ENCODE measurements at regions of chr2 and their contacts with region 1.

Region 1: GRCh38 chr2:18520451-18521425 is 39.7 kb downstream of the RDH14 start:
- DNase-seq: peak; percentile 85
- ATAC-seq: peak; percentile 93
- H3K4me3 Mint-ChIP-seq: no peak overlapping the region
- H3K27ac Mint-ChIP-seq: no peak overlapping the region
- H3K4me1 Mint-ChIP-seq: peaks cover 10% of the 10 kb centered on the region
- H3K27me3 Mint-ChIP-seq: no peaks in the 10 kb centered on the region; the same call in 1 of the 2 replicates
- CTCF ChIP-seq: peak; percentile 90

Region 2: GRCh38 chr2:18387441-18388206 is 133.1 kb before region 1 on chr2:
- CTCF ChIA-PET with region 1: interaction called, 13 read pairs
- POLR2A ChIA-PET with region 1: no interaction called
- DNase-seq: peak; percentile 87
- ATAC-seq: peak; percentile 93
- H3K4me3 Mint-ChIP-seq: no peak overlapping the region
- H3K27ac Mint-ChIP-seq: no peak overlapping the region
- H3K4me1 Mint-ChIP-seq: no peaks in the 10 kb centered on the region
- H3K27me3 Mint-ChIP-seq: no peaks in the 10 kb centered on the region
- CTCF ChIP-seq: peak; percentile 94

Region 3: GRCh38 chr2:18560031-18560796 is 39.5 kb after region 1 on chr2 and contains the start of gene RDH14:
- CTCF ChIA-PET with region 1: interaction called, 22 read pairs
- POLR2A ChIA-PET with region 1: interaction called, 5 read pairs
- DNase-seq: peak; percentile 97
- ATAC-seq: peak; percentile 95
- H3K4me3 Mint-ChIP-seq: peak within 1 kb of the TSS; percentile 92
- H3K27ac Mint-ChIP-seq: peak within 1 kb of the TSS; percentile 94
- H3K4me1 Mint-ChIP-seq: peaks cover 24% of the 10 kb centered on the region
- H3K27me3 Mint-ChIP-seq: no peaks in the 10 kb centered on the region; the same call in 1 of the 2 replicates
- CTCF ChIP-seq: no peak
- total RNA-seq, gene RDH14: 20.6 to 22.4 TPM (median 20.9 TPM) in 3 replicates

Region 4: GRCh38 chr2:18626256-18626668 is 105.5 kb after region 1 on chr2:
- CTCF ChIA-PET with region 1: no interaction called
- POLR2A ChIA-PET with region 1: no interaction called
- DNase-seq: no peak
- ATAC-seq: no peak
- H3K4me3 Mint-ChIP-seq: no peak overlapping the region
- H3K27ac Mint-ChIP-seq: no peak overlapping the region
- H3K4me1 Mint-ChIP-seq: no peaks in the 10 kb centered on the region
- H3K27me3 Mint-ChIP-seq: no peaks in the 10 kb centered on the region
- CTCF ChIP-seq: no peak

Region 5: GRCh38 chr2:18690342-18690741 is 169.6 kb after region 1 on chr2:
- CTCF ChIA-PET with region 1: interaction called, 25 read pairs
- POLR2A ChIA-PET with region 1: no interaction called
- DNase-seq: peak; percentile 76
- ATAC-seq: peak; percentile 99
- H3K4me3 Mint-ChIP-seq: no peak overlapping the region
- H3K27ac Mint-ChIP-seq: no peak overlapping the region
- H3K4me1 Mint-ChIP-seq: no peaks in the 10 kb centered on the region
- H3K27me3 Mint-ChIP-seq: peaks cover 5% of the 10 kb centered on the region
- CTCF ChIP-seq: peak; percentile 70

Region 6: GRCh38 chr2:18741895-18742732 is 221.4 kb after region 1 on chr2:
- CTCF ChIA-PET with region 1: interaction called, 27 read pairs
- POLR2A ChIA-PET with region 1: no interaction called
- DNase-seq: no peak
- ATAC-seq: peak; percentile 69
- H3K4me3 Mint-ChIP-seq: no peak overlapping the region
- H3K27ac Mint-ChIP-seq: no peak overlapping the region
- H3K4me1 Mint-ChIP-seq: peaks cover 4% of the 10 kb centered on the region
- H3K27me3 Mint-ChIP-seq: no peaks in the 10 kb centered on the region
- CTCF ChIP-seq: no peak

Region 7: GRCh38 chr2:18771212-18771611 is 250.5 kb after region 1 on chr2:
- CTCF ChIA-PET with region 1: no interaction called
- POLR2A ChIA-PET with region 1: no interaction called
- DNase-seq: no peak
- ATAC-seq: no peak
- H3K4me3 Mint-ChIP-seq: no peak overlapping the region
- H3K27ac Mint-ChIP-seq: no peak overlapping the region
- H3K4me1 Mint-ChIP-seq: no peaks in the 10 kb centered on the region
- H3K27me3 Mint-ChIP-seq: peaks cover 38% of the 10 kb centered on the region
- CTCF ChIP-seq: no peak

Measured in WTC11 (cell line).